A673 (cell line): ENCODE measurements at regions of chr1 and their contacts with region 1.

Region 1: GRCh38 chr1:167501515-167502191 is 16.7 kb downstream of the CD247 start:
- DNase-seq: no peak
- H3K4me3 ChIP-seq: no peak overlapping the region
- H3K27ac ChIP-seq: no peak overlapping the region
- H3K4me1 ChIP-seq: no peaks in the 10 kb centered on the region
- H3K27me3 ChIP-seq: peaks cover 8% of the 10 kb centered on the region
- CTCF ChIP-seq: no peak

Region 2: GRCh38 chr1:167447521-167448136 is 54.0 kb before region 1 on chr1:
- CTCF ChIA-PET with region 1: no interaction called
- POLR2A ChIA-PET with region 1: no interaction called
- intact Hi-C with region 1: no loop called
- DNase-seq: no peak
- H3K4me3 ChIP-seq: no peak overlapping the region
- H3K27ac ChIP-seq: no peak overlapping the region
- H3K4me1 ChIP-seq: peaks cover 4% of the 10 kb centered on the region
- H3K27me3 ChIP-seq: no peaks in the 10 kb centered on the region
- CTCF ChIP-seq: no peak

Region 3: DNA sequence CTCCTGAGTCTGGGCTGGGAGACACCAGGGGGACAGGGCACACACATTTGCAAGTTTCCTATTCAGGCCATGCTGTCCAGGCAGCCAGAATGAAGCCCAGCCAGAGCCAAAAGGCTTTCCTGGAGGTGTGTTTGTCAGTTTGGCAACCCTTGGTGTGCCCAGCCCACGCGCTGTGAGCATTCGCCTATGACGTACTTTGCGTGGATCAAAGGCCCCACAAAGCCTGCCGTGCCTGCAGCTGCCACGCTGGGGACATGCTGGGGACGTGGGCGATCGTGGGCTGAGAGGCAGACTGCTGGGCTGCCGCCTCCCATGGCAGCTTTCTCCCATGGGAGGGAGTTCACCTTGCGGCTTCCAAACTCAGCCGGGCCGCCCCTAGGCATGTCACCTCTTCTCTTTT is 40.8 kb before region 1 on chr1:
- CTCF ChIA-PET with region 1: no interaction called
- POLR2A ChIA-PET with region 1: no interaction called
- intact Hi-C with region 1: loop called (anchors 1 kb)
- DNase-seq: no peak
- H3K4me3 ChIP-seq: no peak overlapping the region
- H3K27ac ChIP-seq: no peak overlapping the region
- H3K4me1 ChIP-seq: no peaks in the 10 kb centered on the region
- H3K27me3 ChIP-seq: no peaks in the 10 kb centered on the region
- CTCF ChIP-seq: no peak